ENCODE measurements at regions of chr6 and their contacts with region 1.

Region 1: GRCh38 chr6:85642774-85643536 is at the start of gene SYNCRIP:
- DNase-seq: peak; percentile 99
- H3K4me3 ChIP-seq: peak within 1 kb of the TSS; percentile 79 to 99
- H3K27ac ChIP-seq: peak within 1 kb of the TSS; percentile 95 to 100
- H3K4me1 ChIP-seq: peaks cover 6% of the 10 kb centered on the region
- H3K27me3 ChIP-seq: no peaks in the 10 kb centered on the region
- CTCF ChIP-seq: no peak
- POLR2A ChIP-seq: peak; percentile 92
- total RNA-seq, gene SYNCRIP: 46.1 to 49.7 TPM

Region 2: DNA sequence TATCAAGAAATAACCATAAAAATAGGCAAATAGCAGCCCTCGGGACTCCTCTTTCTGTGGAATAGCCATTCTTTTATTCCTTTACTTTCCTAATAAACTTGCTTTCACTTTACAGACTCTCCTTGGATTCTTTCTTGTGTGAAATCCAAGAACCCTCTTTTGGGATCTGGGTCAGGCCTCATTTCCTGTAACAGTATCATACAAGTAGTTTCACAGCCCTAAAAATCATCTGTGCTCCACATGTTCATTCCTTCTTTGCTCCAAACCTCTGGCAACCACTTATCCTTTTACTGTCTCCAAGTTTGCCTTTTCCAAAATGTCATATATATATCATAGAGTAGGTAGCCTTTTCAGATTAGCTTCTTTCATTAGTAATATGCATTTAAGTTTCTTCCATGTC is 206.5 kb before region 1 on chr6:
- intact Hi-C with region 1: no loop called
- DNase-seq: no peak
- H3K4me3 ChIP-seq: no peak overlapping the region
- H3K27ac ChIP-seq: no peak overlapping the region
- H3K4me1 ChIP-seq: no peaks in the 10 kb centered on the region
- H3K27me3 ChIP-seq: no peaks in the 10 kb centered on the region
- CTCF ChIP-seq: no peak
- POLR2A ChIP-seq: no peak

Region 3: GRCh38 chr6:85449818-85450759 is 192.9 kb before region 1 on chr6 and contains the start of gene NT5E:
- intact Hi-C with region 1: loop called (anchors 10 kb)
- DNase-seq: peak; percentile 17
- H3K4me3 ChIP-seq: peak within 1 kb of the TSS; percentile 45 to 49
- H3K27ac ChIP-seq: peak within 1 kb of the TSS; percentile 63
- H3K4me1 ChIP-seq: no peaks in the 10 kb centered on the region
- H3K27me3 ChIP-seq: no peaks in the 10 kb centered on the region
- CTCF ChIP-seq: no peak
- POLR2A ChIP-seq: peak; percentile 28
- total RNA-seq, gene NT5E: 8.2 to 31.2 TPM

Region 4: DNA sequence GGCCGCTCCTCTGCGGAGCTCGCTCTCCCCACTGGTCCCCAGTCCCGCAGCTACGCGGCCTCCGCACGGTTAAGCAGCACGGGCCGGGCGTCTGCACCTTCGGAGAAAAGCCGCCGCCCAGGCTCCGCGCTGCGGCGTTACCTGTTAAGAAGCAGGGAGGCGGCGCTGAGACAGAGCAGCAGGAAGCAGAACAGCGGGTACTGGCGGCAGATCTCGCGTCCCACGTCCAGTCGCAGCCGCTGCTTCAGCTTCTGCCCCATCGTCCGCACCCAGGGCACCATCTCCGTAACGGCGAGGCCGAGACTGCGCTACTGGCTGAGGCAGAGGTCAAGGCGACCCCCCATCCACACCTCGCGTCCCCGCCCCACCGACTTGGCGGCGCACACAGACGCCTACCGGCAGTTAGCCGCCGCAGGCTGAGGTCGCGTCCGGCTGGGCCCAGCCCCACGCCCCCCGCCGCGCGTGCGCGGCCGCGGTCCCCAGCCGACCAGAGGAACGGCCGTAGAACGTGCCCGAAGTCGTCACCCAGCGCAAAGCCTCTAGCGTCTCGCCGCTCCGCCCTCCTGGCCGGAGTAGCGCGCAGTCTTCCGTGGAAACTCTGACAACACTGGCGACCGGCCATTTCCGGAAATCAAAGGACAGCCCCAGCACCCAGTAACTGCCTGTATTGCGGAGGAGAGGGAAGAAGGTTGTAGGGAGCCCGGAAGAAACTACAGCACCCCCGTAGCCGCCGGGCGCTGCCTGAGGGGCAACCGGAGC is 49.3 kb before region 1 on chr6 and contains the start of gene SNX14:
- intact Hi-C with region 1: loop called (anchors 2 kb)
- DNase-seq: peak; percentile 92
- H3K4me3 ChIP-seq: peak within 1 kb of the TSS; percentile 51 to 54
- H3K27ac ChIP-seq: peak within 1 kb of the TSS; percentile 88 to 91
- H3K4me1 ChIP-seq: no peaks in the 10 kb centered on the region
- H3K27me3 ChIP-seq: no peaks in the 10 kb centered on the region
- CTCF ChIP-seq: peak in 3 of 4 experiments; percentile 22 to 35 (median 26)
- POLR2A ChIP-seq: peak; percentile 71
- total RNA-seq, gene SNX14: 40.7 to 67.2 TPM